ENCODE measurements at regions of chr20 and their contacts with region 1.

Region 1: DNA sequence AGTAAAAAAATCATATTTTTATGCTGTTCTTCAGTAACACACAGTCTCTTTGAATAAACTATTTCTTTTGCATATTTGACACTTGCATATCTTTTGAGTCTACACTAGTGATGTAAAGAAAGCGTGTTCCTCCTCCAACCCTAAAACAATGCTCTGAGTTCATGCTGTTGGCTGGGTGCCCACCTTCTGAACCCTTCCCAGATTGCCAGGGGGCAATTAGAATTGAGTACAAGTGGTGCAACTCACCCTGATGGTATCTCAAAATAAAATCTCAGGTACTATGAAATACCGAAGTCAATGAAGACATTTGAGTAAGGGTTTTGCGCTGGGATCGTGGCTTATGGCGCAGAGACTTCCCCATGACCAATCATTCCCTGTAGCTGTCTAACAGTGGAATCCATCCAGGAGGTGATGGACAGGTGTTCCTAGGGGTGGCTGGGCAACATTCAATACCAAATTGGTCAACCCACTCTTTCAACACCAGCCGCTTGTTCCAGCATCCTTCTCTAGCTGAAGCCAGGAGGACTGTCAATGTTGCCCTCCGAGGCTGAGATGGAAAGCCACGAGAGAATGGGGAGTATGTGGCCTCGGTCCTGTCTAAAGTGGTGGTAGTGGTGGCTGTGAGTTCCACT is 94.4 kb upstream of the ZNFX1 start:
- DNase-seq: no peak
- ATAC-seq: no peak
- H3K4me3 ChIP-seq: no peak overlapping the region
- H3K27ac ChIP-seq: no peak overlapping the region
- H3K4me1 ChIP-seq: peaks cover 0 to 3% (median 0%) of the 10 kb centered on the region in 9 donors
- H3K27me3 ChIP-seq: peaks cover 0 to 2% (median 0%) of the 10 kb centered on the region in 7 donors
- CTCF ChIP-seq: no peak

Region 2: GRCh38 chr20:48139262-48139987 is 1232.8 kb before region 1 on chr20:
- intact Hi-C with region 1: loop called in 1 of 10 experiments (anchors 5 kb)
- DNase-seq: no peak
- ATAC-seq: no peak
- H3K4me3 ChIP-seq: no peak overlapping the region
- H3K27ac ChIP-seq: no peak overlapping the region
- H3K4me1 ChIP-seq: peaks cover 0 to 3% (median 0%) of the 10 kb centered on the region in 9 donors
- H3K27me3 ChIP-seq: peaks cover 0 to 34% (median 6%) of the 10 kb centered on the region in 7 donors
- CTCF ChIP-seq: no peak

Region 3: GRCh38 chr20:49768204-49769047 is 396.2 kb after region 1 on chr20:
- intact Hi-C with region 1: no loop called
- DNase-seq: peak in 1 of 2 donors; percentile 44
- ATAC-seq: peak; percentile 50 to 80 (median 70)
- H3K4me3 ChIP-seq: peak overlapping the region in 1 of 10 donors; percentile 10
- H3K27ac ChIP-seq: peak overlapping the region; percentile 37 to 86 (median 60)
- H3K4me1 ChIP-seq: peaks cover 0 to 97% (median 42%) of the 10 kb centered on the region in 9 donors
- H3K27me3 ChIP-seq: no peaks in the 10 kb centered on the region
- CTCF ChIP-seq: no peak

Measured in heart right ventricle (tissue), 16 donors.